ENCODE measurements at regions of chr13 and their contacts with region 1.

Region 1: DNA sequence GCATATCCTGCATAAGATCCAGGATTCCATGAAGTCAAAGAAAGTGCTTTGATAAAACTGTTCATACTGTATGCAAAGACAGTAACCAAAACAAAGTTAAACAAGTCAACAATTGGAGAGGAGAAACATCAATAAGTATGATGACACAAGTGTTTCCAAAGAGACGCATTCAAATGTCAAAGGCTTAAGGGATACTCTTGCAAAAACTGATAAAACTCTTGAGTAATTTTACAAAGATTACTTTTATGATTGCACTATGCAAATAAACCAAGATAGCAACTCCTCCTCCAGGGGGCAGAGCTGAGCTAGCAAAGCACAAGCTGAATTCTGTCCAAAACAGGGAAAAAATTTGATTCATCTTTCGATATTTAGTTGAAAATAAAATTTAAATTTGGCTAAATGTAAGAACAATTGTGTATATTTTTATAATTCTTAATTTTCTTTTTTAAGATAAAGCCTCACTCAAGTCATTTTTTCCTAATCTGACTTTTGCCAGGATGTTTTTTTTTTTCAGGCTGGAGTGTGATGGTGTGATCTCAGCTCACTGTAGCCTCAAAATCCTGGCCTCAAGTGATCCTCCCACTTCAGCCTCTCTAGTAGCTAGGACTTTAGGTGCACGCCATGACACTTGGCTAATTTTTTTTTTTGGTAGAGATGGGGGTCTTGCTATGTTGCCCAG is 84.0 kb downstream of the MZT1 start:
- DNase-seq: peak; percentile 70 to 86
- H3K4me3 ChIP-seq: no peak overlapping the region
- H3K4me3 Mint-ChIP-seq: no peak overlapping the region
- H3K27ac Mint-ChIP-seq: no peak overlapping the region
- H3K4me1 ChIP-seq: no peaks in the 10 kb centered on the region
- H3K4me1 Mint-ChIP-seq: no peaks in the 10 kb centered on the region
- H3K27me3 ChIP-seq: no peaks in the 10 kb centered on the region
- H3K27me3 Mint-ChIP-seq: peaks cover 2% of the 10 kb centered on the region
- CTCF ChIP-seq: peak; percentile 69 to 78

Region 2: GRCh38 chr13:72341904-72342303 is 301.5 kb before region 1 on chr13:
- CTCF ChIA-PET with region 1: no interaction called
- POLR2A ChIA-PET with region 1: no interaction called
- intact Hi-C with region 1: loop called (anchors 10 kb)
- DNase-seq: peak in 1 of 2 experiments; percentile 28
- H3K4me3 ChIP-seq: no peak overlapping the region
- H3K4me3 Mint-ChIP-seq: no peak overlapping the region
- H3K27ac Mint-ChIP-seq: no peak overlapping the region
- H3K4me1 ChIP-seq: no peaks in the 10 kb centered on the region
- H3K4me1 Mint-ChIP-seq: no peaks in the 10 kb centered on the region
- H3K27me3 ChIP-seq: no peaks in the 10 kb centered on the region
- H3K27me3 Mint-ChIP-seq: peaks cover 12% of the 10 kb centered on the region
- CTCF ChIP-seq: peak; percentile 19 to 39

Region 3: DNA sequence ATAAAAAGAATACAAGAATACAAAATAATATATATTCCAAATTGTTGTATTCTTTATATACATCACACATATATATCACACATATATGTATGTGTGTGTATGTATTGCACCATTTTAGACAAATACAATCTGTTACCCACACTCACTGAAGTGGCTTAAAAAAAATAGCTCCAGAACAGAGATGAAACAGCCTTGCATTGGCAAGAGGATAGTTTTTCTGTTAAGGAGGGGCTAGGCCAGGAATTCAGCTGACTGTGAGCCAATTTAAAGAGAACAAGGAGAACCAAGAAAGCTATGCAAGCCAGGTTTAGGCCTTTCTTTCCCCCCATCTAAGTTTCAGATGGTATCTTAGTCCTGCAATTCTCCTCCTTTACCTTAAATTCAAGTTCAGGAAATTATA is 173.5 kb before region 1 on chr13:
- CTCF ChIA-PET with region 1: no interaction called
- POLR2A ChIA-PET with region 1: no interaction called
- intact Hi-C with region 1: loop called (anchors 5 kb)
- DNase-seq: no peak
- H3K4me3 ChIP-seq: no peak overlapping the region
- H3K4me3 Mint-ChIP-seq: no peak overlapping the region
- H3K27ac Mint-ChIP-seq: no peak overlapping the region
- H3K4me1 ChIP-seq: no peaks in the 10 kb centered on the region
- H3K4me1 Mint-ChIP-seq: no peaks in the 10 kb centered on the region
- H3K27me3 ChIP-seq: no peaks in the 10 kb centered on the region
- H3K27me3 Mint-ChIP-seq: peaks cover 11% of the 10 kb centered on the region
- CTCF ChIP-seq: no peak

Region 4: GRCh38 chr13:72677431-72677830 is 34.0 kb after region 1 on chr13:
- CTCF ChIA-PET with region 1: no interaction called
- POLR2A ChIA-PET with region 1: no interaction called
- intact Hi-C with region 1: loop called (anchors 1 kb)
- DNase-seq: peak in 1 of 2 experiments; percentile 59
- H3K4me3 ChIP-seq: no peak overlapping the region
- H3K4me3 Mint-ChIP-seq: peak overlapping the region; percentile 10
- H3K27ac Mint-ChIP-seq: peak overlapping the region; percentile 48
- H3K4me1 ChIP-seq: peaks cover 14% of the 10 kb centered on the region
- H3K4me1 Mint-ChIP-seq: peaks cover 6% of the 10 kb centered on the region
- H3K27me3 ChIP-seq: no peaks in the 10 kb centered on the region
- H3K27me3 Mint-ChIP-seq: no peaks in the 10 kb centered on the region
- CTCF ChIP-seq: no peak

Region 5: GRCh38 chr13:72696579-72696978 is 53.1 kb after region 1 on chr13:
- CTCF ChIA-PET with region 1: no interaction called
- POLR2A ChIA-PET with region 1: no interaction called
- intact Hi-C with region 1: loop called (anchors 1 kb)
- DNase-seq: no peak
- H3K4me3 ChIP-seq: no peak overlapping the region
- H3K4me3 Mint-ChIP-seq: no peak overlapping the region
- H3K27ac Mint-ChIP-seq: no peak overlapping the region
- H3K4me1 ChIP-seq: no peaks in the 10 kb centered on the region
- H3K4me1 Mint-ChIP-seq: no peaks in the 10 kb centered on the region
- H3K27me3 ChIP-seq: no peaks in the 10 kb centered on the region
- H3K27me3 Mint-ChIP-seq: no peaks in the 10 kb centered on the region
- CTCF ChIP-seq: peak in 1 of 2 experiments; percentile 58

Region 6: GRCh38 chr13:72745260-72745659 is 101.8 kb after region 1 on chr13:
- CTCF ChIA-PET with region 1: no interaction called
- POLR2A ChIA-PET with region 1: no interaction called
- intact Hi-C with region 1: no loop called
- DNase-seq: no peak
- H3K4me3 ChIP-seq: no peak overlapping the region
- H3K4me3 Mint-ChIP-seq: no peak overlapping the region
- H3K27ac Mint-ChIP-seq: no peak overlapping the region
- H3K4me1 ChIP-seq: no peaks in the 10 kb centered on the region
- H3K4me1 Mint-ChIP-seq: peaks cover 15% of the 10 kb centered on the region
- H3K27me3 ChIP-seq: no peaks in the 10 kb centered on the region
- H3K27me3 Mint-ChIP-seq: no peaks in the 10 kb centered on the region
- CTCF ChIP-seq: no peak

Region 7: GRCh38 chr13:72983085-72983768 is 339.8 kb after region 1 on chr13:
- CTCF ChIA-PET with region 1: no interaction called
- POLR2A ChIA-PET with region 1: no interaction called
- intact Hi-C with region 1: no loop called
- DNase-seq: peak; percentile 38 to 48
- H3K4me3 ChIP-seq: no peak overlapping the region
- H3K4me3 Mint-ChIP-seq: no peak overlapping the region
- H3K27ac Mint-ChIP-seq: peak overlapping the region; percentile 36
- H3K4me1 ChIP-seq: peaks cover 51% of the 10 kb centered on the region
- H3K4me1 Mint-ChIP-seq: no peaks in the 10 kb centered on the region
- H3K27me3 ChIP-seq: no peaks in the 10 kb centered on the region
- H3K27me3 Mint-ChIP-seq: no peaks in the 10 kb centered on the region
- CTCF ChIP-seq: no peak

Measured in Caco-2 (cell line).